ENCODE measurements at regions of chr14 and their contacts with region 1.

Region 1: GRCh38 chr14:24160850-24161804 is at the start of gene IRF9:
- DNase-seq: peak; percentile 99
- ATAC-seq: peak; percentile 92
- H3K4me3 ChIP-seq: peak within 1 kb of the TSS; percentile 50 to 78 (median 64)
- H3K27ac ChIP-seq: peak within 1 kb of the TSS; percentile 62
- H3K4me1 ChIP-seq: peaks cover 28% of the 10 kb centered on the region
- H3K27me3 ChIP-seq: no peaks in the 10 kb centered on the region; a peak in 1 of 5 replicates
- CTCF ChIP-seq: peak; percentile 100
- EP300 ChIP-seq: peak; percentile 55 to 85; a peak in 3 of 4 replicates
- POLR2A ChIP-seq: peak in 1 of 2 experiments; percentile 66; a peak in 2 of 4 replicates
- RAD21 ChIP-seq: peak; percentile 99
- total RNA-seq, gene IRF9: 13.8 and 14.9 TPM in 2 replicates

Region 2: GRCh38 chr14:24013654-24014514 is 147.2 kb before region 1 on chr14:
- CTCF ChIA-PET with region 1: interaction called, 12 read pairs
- POLR2A ChIA-PET with region 1: no interaction called
- in situ Hi-C with region 1: no loop called
- intact Hi-C with region 1: loop called (anchors 1 kb)
- DNase-seq: peak; percentile 92
- ATAC-seq: peak; percentile 98
- H3K4me3 ChIP-seq: no peak overlapping the region
- H3K27ac ChIP-seq: no peak overlapping the region
- H3K4me1 ChIP-seq: peaks cover 53% of the 10 kb centered on the region
- H3K27me3 ChIP-seq: no peaks in the 10 kb centered on the region
- CTCF ChIP-seq: peak; percentile 100
- EP300 ChIP-seq: peak in 1 of 2 experiments; percentile 11; a peak in 1 of 4 replicates
- POLR2A ChIP-seq: no peak
- RAD21 ChIP-seq: peak; percentile 100

Region 3: GRCh38 chr14:24098927-24099813 is 62.0 kb before region 1 on chr14:
- CTCF ChIA-PET with region 1: no interaction called
- POLR2A ChIA-PET with region 1: interaction called, 88 read pairs
- in situ Hi-C with region 1: no loop called
- intact Hi-C with region 1: loop called (anchors 1 kb)
- DNase-seq: no peak
- ATAC-seq: no peak
- H3K4me3 ChIP-seq: no peak overlapping the region
- H3K27ac ChIP-seq: no peak overlapping the region
- H3K4me1 ChIP-seq: peaks cover 50% of the 10 kb centered on the region
- H3K27me3 ChIP-seq: peaks cover 0 to 6% of the 10 kb centered on the region in 2 experiments; a peak in 1 of 5 replicates
- CTCF ChIP-seq: no peak
- EP300 ChIP-seq: no peak
- POLR2A ChIP-seq: 0 out of 4 replicates have a peak, but pooled peaks of 1 of the 2 experiments have one; percentile 28
- RAD21 ChIP-seq: no peak

Region 4: GRCh38 chr14:24135834-24136542 is 25.1 kb before region 1 on chr14 and contains the start of gene PSME1:
- CTCF ChIA-PET with region 1: interaction called, 6 read pairs
- POLR2A ChIA-PET with region 1: interaction called, 208 read pairs
- in situ Hi-C with region 1: no loop called
- intact Hi-C with region 1: loop called (anchors 1 kb)
- DNase-seq: peak; percentile 93
- ATAC-seq: peak; percentile 86
- H3K4me3 ChIP-seq: peak within 1 kb of the TSS; percentile 91 to 98 (median 93)
- H3K27ac ChIP-seq: peak within 1 kb of the TSS; percentile 75
- H3K4me1 ChIP-seq: peaks cover 64% of the 10 kb centered on the region
- H3K27me3 ChIP-seq: no peaks in the 10 kb centered on the region; a peak in 1 of 5 replicates
- CTCF ChIP-seq: peak; percentile 47; the same call in 1 of the 2 replicates
- EP300 ChIP-seq: peak; percentile 23 to 43; a peak in 1 of 4 replicates
- POLR2A ChIP-seq: peak in 1 of 2 experiments; percentile 31; a peak in 1 of 4 replicates
- RAD21 ChIP-seq: peak; percentile 71
- total RNA-seq, gene PSME1: 608 and 713 TPM in 2 replicates

Region 5: DNA sequence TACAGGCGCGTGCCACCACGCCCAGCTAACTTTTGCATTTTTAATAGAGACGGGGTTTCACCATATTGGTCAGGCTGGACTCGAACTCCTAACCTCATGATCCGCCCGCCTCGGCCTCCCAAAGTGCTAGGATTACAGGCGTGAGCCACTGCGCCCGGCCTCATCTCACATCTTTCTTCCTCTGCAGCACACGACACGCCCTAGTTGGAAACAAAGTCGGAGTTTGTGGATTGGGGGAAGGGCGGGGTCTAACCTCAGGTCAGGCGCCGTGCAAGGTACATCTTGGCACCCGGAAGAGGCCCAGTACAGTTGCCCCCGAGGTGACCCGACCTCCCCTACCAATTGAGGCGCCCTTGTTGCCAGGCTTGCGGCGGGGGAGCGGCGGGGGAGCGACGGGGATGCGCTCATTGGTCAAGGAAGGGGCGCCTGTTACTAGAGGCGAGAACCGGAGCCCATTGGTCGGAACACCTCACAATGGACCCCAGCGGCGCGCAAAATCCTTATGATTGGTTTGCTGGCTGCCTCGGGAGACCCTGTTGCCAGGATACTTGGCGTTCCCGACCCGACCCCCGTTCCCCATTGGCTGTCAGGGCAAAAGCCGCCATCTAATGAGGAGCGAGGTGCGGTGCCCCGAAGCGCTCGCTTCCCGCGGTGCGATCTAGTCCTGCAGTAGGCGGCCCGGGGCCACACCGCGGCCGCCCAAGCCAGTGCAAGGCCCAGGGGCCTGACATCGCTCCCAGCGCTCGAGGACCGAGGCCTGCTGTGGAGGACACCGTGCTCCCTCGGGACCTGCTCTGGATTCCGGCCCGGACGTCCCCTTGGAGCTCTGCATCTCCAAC is 10.5 kb after region 1 on chr14 and contains the start of gene REC8:
- CTCF ChIA-PET with region 1: no interaction called
- POLR2A ChIA-PET with region 1: interaction called, 21 read pairs
- in situ Hi-C with region 1: no loop called
- intact Hi-C with region 1: no loop called
- DNase-seq: no peak
- ATAC-seq: peak; percentile 15
- H3K4me3 ChIP-seq: no peak within 1 kb of the TSS
- H3K27ac ChIP-seq: no peak within 1 kb of the TSS
- H3K4me1 ChIP-seq: no peaks in the 10 kb centered on the region
- H3K27me3 ChIP-seq: no peaks in the 10 kb centered on the region
- CTCF ChIP-seq: no peak
- EP300 ChIP-seq: no peak
- POLR2A ChIP-seq: peak in 1 of 2 experiments; percentile 16; a peak in 1 of 4 replicates
- RAD21 ChIP-seq: no peak
- total RNA-seq, gene REC8: 3.4 TPM in 1 of 2 replicates, not detected in the other

Region 6: GRCh38 chr14:24195191-24196070 is 34.3 kb after region 1 on chr14 and contains the start of gene TM9SF1:
- CTCF ChIA-PET with region 1: no interaction called
- POLR2A ChIA-PET with region 1: interaction called, 38 read pairs
- in situ Hi-C with region 1: no loop called
- intact Hi-C with region 1: no loop called
- DNase-seq: peak; percentile 93
- ATAC-seq: peak; percentile 94
- H3K4me3 ChIP-seq: peak within 1 kb of the TSS; percentile 79 to 91 (median 85)
- H3K27ac ChIP-seq: peak within 1 kb of the TSS; percentile 84
- H3K4me1 ChIP-seq: peaks cover 65% of the 10 kb centered on the region
- H3K27me3 ChIP-seq: no peaks in the 10 kb centered on the region; a peak in 1 of 5 replicates
- CTCF ChIP-seq: peak; percentile 54
- EP300 ChIP-seq: peak; percentile 7 to 39; a peak in 1 of 4 replicates
- POLR2A ChIP-seq: peak in 1 of 2 experiments; percentile 81; a peak in 2 of 4 replicates
- RAD21 ChIP-seq: peak; percentile 52
- total RNA-seq, gene TM9SF1: 56.4 and 110 TPM in 2 replicates

Region 7: GRCh38 chr14:24310646-24311604 is 149.8 kb after region 1 on chr14 and contains the start of gene LTB4R:
- CTCF ChIA-PET with region 1: no interaction called
- POLR2A ChIA-PET with region 1: interaction called, 15 read pairs
- in situ Hi-C with region 1: no loop called
- intact Hi-C with region 1: no loop called
- DNase-seq: no peak
- ATAC-seq: no peak
- H3K4me3 ChIP-seq: no peak within 1 kb of the TSS
- H3K27ac ChIP-seq: peak within 1 kb of the TSS; percentile 4
- H3K4me1 ChIP-seq: peaks cover 61% of the 10 kb centered on the region
- H3K27me3 ChIP-seq: no peaks in the 10 kb centered on the region; a peak in 1 of 5 replicates
- CTCF ChIP-seq: no peak
- EP300 ChIP-seq: no peak
- POLR2A ChIP-seq: no peak
- RAD21 ChIP-seq: no peak
- total RNA-seq, gene LTB4R: 1.00 and 3.2 TPM in 2 replicates

Region 8: GRCh38 chr14:24403294-24403998 is 242.3 kb after region 1 on chr14:
- CTCF ChIA-PET with region 1: no interaction called
- POLR2A ChIA-PET with region 1: no interaction called
- in situ Hi-C with region 1: no loop called
- intact Hi-C with region 1: no loop called
- DNase-seq: no peak
- ATAC-seq: no peak
- H3K4me3 ChIP-seq: no peak overlapping the region
- H3K27ac ChIP-seq: no peak overlapping the region
- H3K4me1 ChIP-seq: peaks cover 35% of the 10 kb centered on the region
- H3K27me3 ChIP-seq: peaks cover 8 to 23% of the 10 kb centered on the region in 2 experiments; a peak in 4 of 5 replicates
- CTCF ChIP-seq: no peak
- EP300 ChIP-seq: no peak
- POLR2A ChIP-seq: no peak
- RAD21 ChIP-seq: no peak

Measured in HepG2 (cell line).